Prostate gland (tissue), 2 donors: ENCODE measurements at regions of chr10 and their contacts with region 1.

Region 1: DNA sequence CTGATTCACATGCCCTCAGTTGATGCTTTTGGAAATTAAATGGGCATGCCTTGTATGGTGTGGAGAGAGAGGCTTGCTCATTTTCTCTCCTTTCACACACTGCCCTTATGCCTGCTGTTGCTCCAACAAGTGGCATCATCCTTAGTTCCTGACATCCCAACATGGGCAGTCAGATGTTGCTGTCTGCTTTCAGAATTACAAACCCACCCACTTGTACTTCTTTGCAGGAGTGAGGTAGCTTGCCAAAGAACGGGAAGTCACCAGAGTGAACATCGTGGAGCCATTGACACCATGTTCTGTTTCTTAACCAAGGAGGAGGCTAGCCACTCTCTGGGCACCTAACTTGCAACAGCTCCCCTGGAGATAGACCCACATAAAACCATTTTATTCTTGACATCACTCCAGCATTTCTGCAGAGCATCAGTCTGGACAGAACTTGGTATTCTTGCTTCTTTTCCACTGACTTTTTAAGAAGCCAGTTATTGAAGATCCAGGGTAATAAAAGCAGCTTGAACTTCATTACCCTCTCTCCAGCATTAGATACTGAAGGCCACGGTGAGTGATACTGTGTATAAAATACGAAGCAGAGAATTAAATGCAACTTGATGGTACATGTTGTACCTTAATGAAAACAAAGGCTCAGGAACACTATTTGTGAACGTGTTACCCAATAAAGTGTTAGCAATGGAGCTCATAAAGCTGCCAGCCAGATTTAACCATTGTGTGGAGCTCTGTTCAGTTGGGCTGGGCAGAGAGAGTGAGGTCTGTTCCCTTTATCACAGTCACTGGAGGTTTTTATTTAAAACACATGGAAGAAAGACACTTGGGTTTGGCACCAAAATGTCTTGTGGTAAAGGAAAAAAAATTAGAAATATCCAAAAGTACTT is 195.8 kb upstream of the HABP2 start:
- DNase-seq: peak; percentile 55
- H3K4me3 ChIP-seq: no peak overlapping the region
- H3K27ac ChIP-seq: peak overlapping the region; percentile 13 to 44
- H3K4me1 ChIP-seq: peaks cover 3% of the 10 kb centered on the region
- H3K27me3 ChIP-seq: no peaks in the 10 kb centered on the region
- CTCF ChIP-seq: no peak
- POLR2A ChIP-seq: no peak

Region 2: GRCh38 chr10:112949875-112950507 is 407.0 kb before region 1 on chr10 and contains the start of gene TCF7L2:
- intact Hi-C with region 1: loop called (anchors 10 kb)
- DNase-seq: peak; percentile 97
- H3K4me3 ChIP-seq: peak within 1 kb of the TSS; percentile 68 to 78
- H3K27ac ChIP-seq: peak within 1 kb of the TSS; percentile 91 to 98
- H3K4me1 ChIP-seq: peaks cover 17% of the 10 kb centered on the region
- H3K27me3 ChIP-seq: no peaks in the 10 kb centered on the region
- CTCF ChIP-seq: no peak
- POLR2A ChIP-seq: peak; percentile 77
- total RNA-seq, gene TCF7L2: 9.8 to 29.8 TPM

Region 3: DNA sequence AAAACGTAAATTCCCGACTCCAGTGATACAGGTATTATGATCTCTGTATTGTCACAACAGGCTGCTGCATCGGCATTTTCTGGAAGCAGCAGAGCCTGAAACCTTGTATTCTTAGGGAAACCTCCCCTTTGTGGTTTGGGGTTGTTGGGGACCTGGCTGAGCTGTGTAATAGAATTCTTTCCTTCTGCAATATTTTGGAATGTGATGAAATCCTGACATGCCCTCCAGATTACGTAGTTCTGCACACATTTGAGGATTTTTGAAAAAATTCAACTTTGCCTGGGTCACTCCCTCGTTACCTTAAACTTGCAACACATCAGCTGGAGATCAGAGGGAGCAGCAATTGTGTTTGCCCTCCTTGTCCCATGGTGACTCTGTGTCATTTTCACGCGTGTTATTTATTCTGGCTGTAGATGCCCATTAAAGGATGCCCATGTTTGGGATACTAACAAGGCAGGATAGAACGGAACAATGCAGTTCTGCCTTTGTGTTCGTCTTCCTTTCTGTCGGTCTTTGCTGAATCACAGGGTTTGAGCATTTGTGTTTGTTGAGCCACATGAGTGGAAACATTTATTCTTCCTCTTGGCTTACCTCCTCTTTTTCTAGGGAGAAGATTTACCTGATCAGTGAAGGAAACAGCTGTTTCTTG is 225.3 kb before region 1 on chr10:
- intact Hi-C with region 1: loop called (anchors 5 kb)
- DNase-seq: no peak
- H3K4me3 ChIP-seq: no peak overlapping the region
- H3K27ac ChIP-seq: no peak overlapping the region
- H3K4me1 ChIP-seq: no peaks in the 10 kb centered on the region
- H3K27me3 ChIP-seq: no peaks in the 10 kb centered on the region
- CTCF ChIP-seq: no peak
- POLR2A ChIP-seq: no peak

Region 4: DNA sequence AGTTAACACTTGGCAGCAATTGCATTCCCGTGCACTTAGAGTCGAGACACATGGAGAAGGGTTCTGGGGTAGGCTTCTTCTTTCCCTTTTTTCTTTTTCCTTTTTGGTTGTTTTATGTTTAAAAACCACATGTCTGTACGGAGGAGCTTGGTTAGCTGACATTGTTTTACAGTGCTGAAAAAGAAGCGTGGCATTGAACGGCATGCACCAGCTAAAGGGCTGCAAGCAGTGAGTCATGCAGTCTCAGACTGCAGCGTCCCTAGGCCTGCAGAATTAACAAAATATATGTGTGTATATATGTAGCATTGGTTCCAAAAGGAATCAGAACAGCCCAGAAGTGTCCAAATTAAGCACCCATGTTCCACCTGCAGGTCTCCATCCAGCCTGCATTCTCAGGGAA is 196.0 kb before region 1 on chr10:
- intact Hi-C with region 1: loop called (anchors 5 kb)
- DNase-seq: no peak
- H3K4me3 ChIP-seq: no peak overlapping the region
- H3K27ac ChIP-seq: no peak overlapping the region
- H3K4me1 ChIP-seq: no peaks in the 10 kb centered on the region
- H3K27me3 ChIP-seq: no peaks in the 10 kb centered on the region
- CTCF ChIP-seq: no peak
- POLR2A ChIP-seq: no peak

Region 5: DNA sequence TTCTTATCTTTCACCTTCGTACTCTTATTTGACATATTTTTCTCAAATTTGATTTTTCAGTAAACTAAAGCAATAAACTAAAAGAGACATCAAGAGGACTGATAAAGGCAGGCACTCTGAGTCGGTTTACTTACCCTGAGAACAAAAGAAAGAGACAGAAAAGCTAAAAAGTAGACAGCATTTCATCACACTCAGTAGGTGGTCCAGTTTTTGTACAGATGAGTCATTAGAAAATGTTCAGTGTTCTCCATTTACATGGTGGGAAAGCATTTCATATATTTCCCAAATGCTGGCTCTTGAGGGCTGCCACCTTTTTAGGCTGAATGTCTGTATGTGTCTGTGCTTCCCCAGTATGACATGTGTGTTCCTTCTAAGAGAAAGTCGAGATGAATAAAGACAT is 550.1 kb after region 1 on chr10:
- intact Hi-C with region 1: no loop called
- DNase-seq: no peak
- H3K4me3 ChIP-seq: no peak overlapping the region
- H3K27ac ChIP-seq: no peak overlapping the region
- H3K4me1 ChIP-seq: no peaks in the 10 kb centered on the region
- H3K27me3 ChIP-seq: no peaks in the 10 kb centered on the region
- CTCF ChIP-seq: no peak
- POLR2A ChIP-seq: no peak